ENCODE measurements at regions of chr5 and their contacts with region 1.

Region 1: DNA sequence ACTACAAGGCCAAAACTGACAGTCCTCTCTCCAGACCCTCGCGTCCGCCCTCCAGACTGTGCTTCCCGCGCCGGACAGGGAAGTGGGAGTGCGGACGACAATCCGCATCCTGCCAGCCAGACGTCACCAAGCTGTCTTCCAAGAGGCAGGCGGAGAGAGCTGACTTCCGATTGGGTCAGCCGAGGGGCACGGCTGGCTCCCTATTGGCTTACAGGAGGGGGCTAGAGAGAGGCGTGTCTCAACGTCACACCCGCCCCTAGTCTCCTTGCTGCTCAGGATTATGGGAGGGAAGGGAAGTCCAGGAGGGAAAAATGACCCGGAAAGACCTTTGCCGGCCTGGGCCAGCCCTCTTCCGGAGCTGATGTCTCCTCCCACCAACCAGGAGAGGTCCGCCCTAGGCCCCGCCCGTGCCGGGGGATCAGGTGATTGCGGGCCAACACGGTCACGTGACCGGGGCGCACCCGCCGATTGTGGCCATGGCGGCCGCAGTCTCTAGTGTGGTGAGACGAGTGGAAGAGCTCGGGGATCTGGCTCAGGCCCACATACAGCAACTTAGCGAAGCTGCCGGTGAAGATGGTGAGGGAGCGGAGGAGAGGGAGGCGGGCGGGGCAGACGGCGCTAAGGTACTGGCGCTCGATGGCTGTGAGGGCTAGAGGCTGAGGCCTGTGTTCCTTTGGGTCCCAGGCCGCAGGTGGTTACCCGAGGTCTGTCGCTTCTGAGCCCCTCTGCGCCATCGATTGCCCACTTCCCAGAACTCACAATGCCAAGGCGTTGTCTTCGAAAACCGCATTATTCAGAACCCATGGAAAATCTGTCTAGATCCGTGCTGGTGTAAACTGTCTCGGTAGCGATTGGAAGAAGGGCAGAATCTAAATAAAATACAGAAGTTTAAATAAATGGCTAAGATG is at the start of gene RIMOC1:
- DNase-seq: peak; percentile 100
- ATAC-seq: peak; percentile 99
- H3K4me3 ChIP-seq: peak within 1 kb of the TSS; percentile 87
- H3K27ac ChIP-seq: peak within 1 kb of the TSS; percentile 90
- H3K4me1 ChIP-seq: no peaks in the 10 kb centered on the region; the same call in 1 of the 2 replicates
- H3K27me3 ChIP-seq: no peaks in the 10 kb centered on the region
- CTCF ChIP-seq: no peak
- POLR2A ChIP-seq: peak; percentile 97
- RAD21 ChIP-seq: no peak
- total RNA-seq, gene RIMOC1: 4.1 and 10.3 TPM in 2 replicates

Region 2: GRCh38 chr5:41754857-41755256 is 149.3 kb before region 1 on chr5:
- CTCF ChIA-PET with region 1: no interaction called
- POLR2A ChIA-PET with region 1: no interaction called
- dilution Hi-C with region 1: no loop called
- in situ Hi-C with region 1: no loop called
- intact Hi-C with region 1: no loop called
- DNase-seq: no peak
- ATAC-seq: no peak
- H3K4me3 ChIP-seq: no peak overlapping the region
- H3K27ac ChIP-seq: no peak overlapping the region
- H3K4me1 ChIP-seq: no peaks in the 10 kb centered on the region
- H3K27me3 ChIP-seq: no peaks in the 10 kb centered on the region
- CTCF ChIP-seq: no peak
- POLR2A ChIP-seq: no peak
- RAD21 ChIP-seq: no peak

Region 3: DNA sequence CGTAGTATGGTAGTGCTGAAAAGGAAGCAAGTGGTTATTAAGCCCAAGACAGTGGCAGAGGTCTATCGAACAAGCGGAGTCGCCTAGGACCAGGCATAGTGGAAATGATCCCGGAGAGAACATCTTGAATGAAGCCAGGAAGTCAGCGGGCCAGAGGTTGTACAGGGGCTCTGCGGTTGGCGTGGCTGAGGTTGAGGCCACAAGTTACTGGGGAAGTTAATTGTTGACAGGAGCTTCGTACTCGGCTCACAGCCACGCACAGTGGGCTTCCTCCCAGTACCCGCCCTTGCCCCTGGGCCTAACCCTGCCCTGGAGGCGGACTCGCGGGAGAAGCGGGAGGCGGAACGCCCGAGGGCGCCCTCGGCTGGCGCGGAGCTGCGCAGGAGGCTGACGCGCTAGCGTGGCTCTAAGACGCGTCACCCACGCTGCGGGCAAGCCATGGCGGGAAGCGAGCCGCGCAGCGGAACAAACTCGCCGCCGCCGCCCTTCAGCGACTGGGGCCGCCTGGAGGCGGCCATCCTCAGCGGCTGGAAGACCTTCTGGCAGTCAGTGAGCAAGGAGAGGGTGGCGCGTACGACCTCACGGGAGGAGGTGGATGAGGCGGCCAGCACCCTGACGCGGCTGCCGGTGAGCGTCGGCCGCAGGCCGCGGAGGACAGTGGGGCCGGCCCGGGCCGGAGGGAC is 20.9 kb after region 1 on chr5 and contains the start of gene FBXO4:
- CTCF ChIA-PET with region 1: no interaction called
- POLR2A ChIA-PET with region 1: interaction called, 4 read pairs
- dilution Hi-C with region 1: no loop called
- in situ Hi-C with region 1: no loop called
- intact Hi-C with region 1: loop called (anchors 2 kb)
- DNase-seq: peak; percentile 78
- ATAC-seq: peak; percentile 99
- H3K4me3 ChIP-seq: peak within 1 kb of the TSS; percentile 67
- H3K27ac ChIP-seq: peak within 1 kb of the TSS; percentile 61
- H3K4me1 ChIP-seq: no peaks in the 10 kb centered on the region; the same call in 1 of the 2 replicates
- H3K27me3 ChIP-seq: no peaks in the 10 kb centered on the region
- CTCF ChIP-seq: peak; percentile 70
- POLR2A ChIP-seq: peak; percentile 84
- RAD21 ChIP-seq: peak; percentile 30; the same call in 1 of the 2 replicates
- total RNA-seq, gene FBXO4: 4.1 and 8.3 TPM in 2 replicates

Region 4: DNA sequence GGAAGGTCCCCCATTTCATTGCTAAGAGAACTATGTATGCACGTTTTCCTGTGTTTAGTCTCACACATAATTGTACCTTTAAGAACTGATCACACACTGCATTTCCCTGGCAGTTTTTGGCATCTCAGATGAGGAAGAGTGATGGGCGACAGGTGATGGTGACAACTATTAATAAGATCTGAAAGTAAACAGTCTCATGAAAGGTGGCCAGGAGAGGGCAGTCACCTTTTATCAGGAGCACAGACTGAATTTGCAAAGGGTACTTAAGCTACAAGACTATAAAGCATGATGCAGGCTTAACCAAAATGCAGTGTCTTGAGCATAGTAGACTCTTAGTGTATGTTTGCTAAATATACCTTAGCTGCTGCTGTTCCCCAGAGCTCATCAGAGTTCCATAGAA is 610.6 kb after region 1 on chr5:
- CTCF ChIA-PET with region 1: no interaction called
- POLR2A ChIA-PET with region 1: no interaction called
- dilution Hi-C with region 1: no loop called
- in situ Hi-C with region 1: no loop called
- intact Hi-C with region 1: no loop called
- DNase-seq: no peak
- ATAC-seq: no peak
- H3K4me3 ChIP-seq: no peak overlapping the region
- H3K27ac ChIP-seq: no peak overlapping the region
- H3K4me1 ChIP-seq: no peaks in the 10 kb centered on the region
- H3K27me3 ChIP-seq: no peaks in the 10 kb centered on the region
- CTCF ChIP-seq: no peak
- POLR2A ChIP-seq: no peak
- RAD21 ChIP-seq: no peak